Sciatic nerve (tissue), 2 donors: ENCODE measurements at regions of chr11 and their contacts with region 1.

Region 1: DNA sequence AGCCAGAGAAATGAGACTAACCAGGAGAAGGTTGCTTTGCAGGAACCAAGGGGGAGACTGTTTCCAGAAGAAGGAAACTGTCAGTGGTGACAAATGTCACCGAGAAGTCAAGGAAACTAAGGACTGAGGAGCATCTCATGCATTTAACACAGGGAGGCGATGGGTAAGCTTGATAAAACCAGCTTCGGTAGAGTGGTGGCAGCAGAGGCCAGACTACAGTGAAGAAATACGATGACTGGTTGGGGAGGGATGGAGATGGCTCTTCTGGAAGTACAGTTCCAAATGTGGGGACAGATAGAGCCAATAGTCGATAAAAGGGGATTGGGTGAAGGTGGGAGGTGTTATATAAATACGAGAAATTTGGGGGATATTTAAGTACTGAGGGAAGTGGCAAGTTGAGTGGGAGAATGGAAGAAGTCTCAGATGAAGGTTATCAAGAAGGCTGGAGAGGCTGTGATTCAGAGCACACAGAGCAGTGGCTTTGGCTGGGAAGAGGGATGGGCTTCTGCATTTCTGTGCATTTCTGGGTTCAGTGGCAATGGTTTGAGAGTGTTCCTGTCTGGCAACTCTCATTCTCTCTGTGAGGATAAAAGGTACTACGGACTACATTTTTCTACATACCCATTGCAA is 29.2 kb downstream of the SC5D start:
- DNase-seq: no peak
- ATAC-seq: peak; percentile 94

Region 2: GRCh38 chr11:121591405-121592033 is 269.8 kb after region 1 on chr11:
- intact Hi-C with region 1: loop called (anchors 5 kb)
- DNase-seq: peak; percentile 74
- ATAC-seq: peak; percentile 82